Aorta (tissue), 5 donors: ENCODE measurements at regions of chr3 and their contacts with region 1.

Region 1: GRCh38 chr3:149480325-149481017 is 6.0 kb downstream of the TM4SF4 start:
- DNase-seq: peak; percentile 87 to 90
- ATAC-seq: peak; percentile 95
- H3K4me3 ChIP-seq: no peak overlapping the region
- H3K27ac ChIP-seq: peak overlapping the region in 1 of 2 donors; percentile 5
- H3K4me1 ChIP-seq: no peaks in the 10 kb centered on the region
- H3K27me3 ChIP-seq: no peaks in the 10 kb centered on the region

Region 2: GRCh38 chr3:148971401-148972163 is 508.9 kb before region 1 on chr3:
- intact Hi-C with region 1: loop called in 1 of 2 experiments (anchors 10 kb)
- DNase-seq: peak in 1 of 2 donors; percentile 69
- ATAC-seq: peak; percentile 24
- H3K4me3 ChIP-seq: no peak overlapping the region
- H3K27ac ChIP-seq: peak overlapping the region; percentile 28 to 81
- H3K4me1 ChIP-seq: peaks cover 0 to 1% of the 10 kb centered on the region in 2 donors
- H3K27me3 ChIP-seq: no peaks in the 10 kb centered on the region

Region 3: GRCh38 chr3:149115114-149115513 is 365.4 kb before region 1 on chr3:
- intact Hi-C with region 1: loop called (anchors 5 to 10 kb)
- DNase-seq: no peak
- ATAC-seq: peak; percentile 40
- H3K4me3 ChIP-seq: no peak overlapping the region
- H3K27ac ChIP-seq: peak overlapping the region; percentile 59 to 96
- H3K4me1 ChIP-seq: peaks cover 0 to 9% of the 10 kb centered on the region in 2 donors
- H3K27me3 ChIP-seq: no peaks in the 10 kb centered on the region

Region 4: GRCh38 chr3:149352556-149352955 is 127.9 kb before region 1 on chr3:
- intact Hi-C with region 1: loop called (anchors 2 kb)
- DNase-seq: peak; percentile 66 to 85
- ATAC-seq: peak; percentile 88
- H3K4me3 ChIP-seq: no peak overlapping the region
- H3K27ac ChIP-seq: no peak overlapping the region
- H3K4me1 ChIP-seq: no peaks in the 10 kb centered on the region
- H3K27me3 ChIP-seq: peaks cover 0 to 2% of the 10 kb centered on the region in 2 donors

Region 5: GRCh38 chr3:149393345-149394160 is 86.9 kb before region 1 on chr3:
- intact Hi-C with region 1: loop called (anchors 2 kb)
- DNase-seq: peak; percentile 76 to 84
- ATAC-seq: peak; percentile 84
- H3K4me3 ChIP-seq: no peak overlapping the region
- H3K27ac ChIP-seq: no peak overlapping the region
- H3K4me1 ChIP-seq: peaks cover 4 to 11% of the 10 kb centered on the region in 2 donors
- H3K27me3 ChIP-seq: no peaks in the 10 kb centered on the region

Region 6: DNA sequence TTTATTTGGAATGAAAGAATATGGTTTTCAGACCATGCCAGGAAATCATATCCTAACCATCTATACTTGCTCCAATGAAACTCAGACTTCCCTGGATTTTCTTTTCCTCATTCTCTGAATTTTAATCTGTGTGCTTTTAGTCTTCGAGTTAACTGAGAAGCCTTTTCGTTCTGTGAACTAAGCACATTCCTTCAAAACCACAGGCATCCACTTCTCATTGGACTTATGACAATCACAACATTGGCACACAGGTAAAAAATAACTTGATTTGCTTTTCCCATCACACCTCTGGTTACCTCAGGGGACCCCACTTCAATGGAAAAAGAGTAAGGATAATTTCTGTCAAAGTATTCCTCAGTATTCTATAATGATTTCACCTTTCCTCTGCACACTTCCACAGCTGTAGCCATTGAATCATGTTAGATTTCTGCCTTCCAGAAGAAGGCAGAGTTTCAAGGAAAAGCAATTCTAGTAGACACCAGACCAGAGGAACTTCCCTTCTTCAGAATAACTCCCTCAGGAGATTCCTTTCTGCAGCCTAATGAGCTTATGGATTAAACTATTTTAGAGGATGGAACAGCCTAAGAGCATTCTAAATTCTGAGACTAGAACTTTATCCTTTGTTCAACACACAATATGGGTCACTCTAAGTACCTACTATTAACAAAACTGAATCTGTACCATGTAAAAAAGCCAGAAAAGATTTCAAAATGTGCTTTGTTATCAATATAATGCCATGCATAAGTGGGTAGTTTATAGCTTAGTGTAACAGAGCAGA is 255.9 kb after region 1 on chr3:
- intact Hi-C with region 1: no loop called
- DNase-seq: no peak
- ATAC-seq: no peak
- H3K4me3 ChIP-seq: no peak overlapping the region
- H3K27ac ChIP-seq: no peak overlapping the region
- H3K4me1 ChIP-seq: no peaks in the 10 kb centered on the region
- H3K27me3 ChIP-seq: no peaks in the 10 kb centered on the region

Region 7: DNA sequence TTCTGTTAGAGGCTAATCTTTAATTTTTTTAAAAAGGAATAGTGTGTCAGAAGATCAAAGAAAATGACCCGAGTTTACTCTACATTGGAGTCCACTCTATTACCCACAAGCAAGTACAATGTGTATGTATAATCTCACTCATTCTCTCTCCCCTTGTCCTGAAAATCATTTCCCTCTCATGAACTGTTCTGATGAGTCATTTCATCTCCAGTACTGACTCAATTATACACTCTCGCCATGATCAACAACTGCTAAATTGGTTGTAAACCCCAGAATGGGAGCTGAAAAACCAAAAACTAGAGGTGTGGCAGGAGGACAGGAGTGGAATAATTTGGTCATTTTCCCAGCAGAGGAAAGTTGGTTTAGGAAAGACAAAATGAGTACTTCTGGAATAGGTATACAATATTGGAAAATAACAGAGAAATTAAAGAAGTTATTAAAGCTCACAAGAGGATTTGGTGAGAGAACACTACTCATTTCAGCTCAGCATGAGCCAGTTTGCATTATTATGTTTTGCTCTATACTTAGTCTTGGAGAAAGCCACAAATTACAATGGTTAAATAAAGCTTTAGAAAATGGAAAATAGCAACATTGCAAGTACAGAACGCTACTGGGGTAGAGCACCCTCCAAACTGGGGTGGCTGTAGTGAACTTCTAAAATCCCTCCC is 634.5 kb after region 1 on chr3:
- intact Hi-C with region 1: no loop called
- DNase-seq: no peak
- ATAC-seq: no peak
- H3K4me3 ChIP-seq: no peak overlapping the region
- H3K27ac ChIP-seq: peak overlapping the region in 1 of 2 donors; percentile 12
- H3K4me1 ChIP-seq: peaks cover 0 to 11% of the 10 kb centered on the region in 2 donors
- H3K27me3 ChIP-seq: no peaks in the 10 kb centered on the region